ENCODE measurements at regions of chr18 and their contacts with region 1.

Region 1: GRCh38 chr18:75478996-75479880 is 51.7 kb upstream of the SMIM21 start:
- DNase-seq: no peak
- H3K4me3 Mint-ChIP-seq: no peak overlapping the region
- H3K27ac Mint-ChIP-seq: no peak overlapping the region
- H3K4me1 Mint-ChIP-seq: no peaks in the 10 kb centered on the region
- H3K27me3 Mint-ChIP-seq: peaks cover 9% of the 10 kb centered on the region

Region 2: GRCh38 chr18:74196220-74197119 is 1282.8 kb before region 1 on chr18:
- intact Hi-C with region 1: no loop called
- DNase-seq: peak; percentile 17
- H3K4me3 Mint-ChIP-seq: peak overlapping the region; percentile 68
- H3K27ac Mint-ChIP-seq: no peak overlapping the region
- H3K4me1 Mint-ChIP-seq: peaks cover 7% of the 10 kb centered on the region
- H3K27me3 Mint-ChIP-seq: peaks cover 5% of the 10 kb centered on the region

Region 3: DNA sequence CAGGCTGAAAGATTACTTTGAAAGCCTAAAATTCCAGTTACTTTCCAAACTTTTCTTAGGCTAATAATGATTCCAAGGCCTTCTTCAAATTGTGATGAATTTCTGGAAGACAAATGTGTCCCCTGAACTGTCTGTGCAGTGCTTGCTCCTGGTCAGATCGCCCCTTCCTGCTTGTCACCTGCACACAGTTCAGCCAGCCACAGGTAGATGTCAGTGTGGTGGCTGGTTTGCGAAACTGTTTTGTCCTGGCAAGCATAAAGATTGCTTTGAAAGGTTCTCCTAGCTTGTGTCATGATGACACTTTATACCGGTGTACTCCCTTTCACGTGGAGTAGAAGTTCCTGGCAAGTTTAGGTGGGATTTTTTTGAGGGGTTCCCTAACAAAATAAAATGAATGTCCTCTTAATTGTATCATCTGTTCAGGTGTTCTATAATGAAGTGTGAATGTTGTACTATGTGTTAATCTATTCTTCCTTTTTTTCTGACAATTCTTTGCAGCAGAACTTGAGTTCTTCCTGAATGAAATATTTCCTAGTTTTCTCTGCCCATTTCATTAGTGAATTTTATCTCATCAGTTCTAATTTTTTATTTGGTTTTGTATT is 582.7 kb before region 1 on chr18:
- intact Hi-C with region 1: loop called (anchors 5 kb)
- DNase-seq: peak; percentile 20
- H3K4me3 Mint-ChIP-seq: no peak overlapping the region
- H3K27ac Mint-ChIP-seq: no peak overlapping the region
- H3K4me1 Mint-ChIP-seq: peaks cover 27% of the 10 kb centered on the region
- H3K27me3 Mint-ChIP-seq: no peaks in the 10 kb centered on the region

Region 4: DNA sequence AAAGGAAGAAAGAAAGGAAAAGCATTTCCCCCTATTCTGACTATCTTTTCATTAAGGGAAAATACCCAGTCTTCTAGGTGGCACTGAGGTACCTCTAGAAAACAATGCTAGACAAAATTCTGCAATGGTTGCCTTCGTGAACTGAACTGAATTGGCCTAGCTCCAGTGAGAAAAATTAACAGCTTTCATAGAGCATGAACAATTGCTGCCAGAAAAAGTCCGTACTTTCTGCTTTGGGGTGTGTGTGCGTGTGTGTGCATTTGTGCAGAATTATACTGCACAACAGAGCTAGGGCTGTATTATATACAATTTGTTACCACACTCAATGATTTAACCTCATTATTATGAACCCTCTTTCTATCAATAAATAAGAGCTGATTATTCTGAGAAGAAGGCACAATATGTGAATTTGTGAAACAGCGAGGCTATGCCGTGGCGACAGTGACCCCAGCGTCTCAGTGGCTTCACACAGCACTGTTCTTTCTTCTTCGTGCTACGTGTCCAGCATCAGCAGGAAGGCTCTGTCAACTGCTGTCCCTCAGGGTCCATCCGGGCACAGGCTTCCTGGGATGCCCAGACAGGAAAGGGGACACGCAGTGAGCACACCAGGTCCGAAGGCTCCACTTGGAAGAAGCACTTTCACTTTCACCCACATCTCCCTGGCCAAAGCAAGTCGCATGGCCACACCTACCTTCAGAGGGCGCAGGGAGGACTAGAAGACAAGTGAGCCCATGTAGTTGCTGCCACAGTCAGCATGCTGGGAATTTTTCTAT is 317.8 kb before region 1 on chr18:
- intact Hi-C with region 1: loop called (anchors 10 kb)
- DNase-seq: no peak
- H3K4me3 Mint-ChIP-seq: peak overlapping the region; percentile 72
- H3K27ac Mint-ChIP-seq: no peak overlapping the region
- H3K4me1 Mint-ChIP-seq: peaks cover 12% of the 10 kb centered on the region
- H3K27me3 Mint-ChIP-seq: peaks cover 12% of the 10 kb centered on the region

Region 5: GRCh38 chr18:75438891-75439290 is 40.3 kb before region 1 on chr18:
- intact Hi-C with region 1: no loop called
- DNase-seq: no peak
- H3K4me3 Mint-ChIP-seq: no peak overlapping the region
- H3K27ac Mint-ChIP-seq: no peak overlapping the region
- H3K4me1 Mint-ChIP-seq: no peaks in the 10 kb centered on the region
- H3K27me3 Mint-ChIP-seq: peaks cover 5% of the 10 kb centered on the region